ENCODE measurements at regions of chr4 and their contacts with region 1.

Region 1: GRCh38 chr4:68498413-68499007 is 51.2 kb downstream of the TMPRSS11E start:
- DNase-seq: peak; percentile 84
- ATAC-seq: peak; percentile 60
- H3K4me3 ChIP-seq: no peak overlapping the region
- H3K27ac ChIP-seq: no peak overlapping the region
- H3K4me1 ChIP-seq: peaks cover 9% of the 10 kb centered on the region; the same call in 1 of the 2 replicates
- H3K27me3 ChIP-seq: no peaks in the 10 kb centered on the region
- CTCF ChIP-seq: peak; percentile 98

Region 2: DNA sequence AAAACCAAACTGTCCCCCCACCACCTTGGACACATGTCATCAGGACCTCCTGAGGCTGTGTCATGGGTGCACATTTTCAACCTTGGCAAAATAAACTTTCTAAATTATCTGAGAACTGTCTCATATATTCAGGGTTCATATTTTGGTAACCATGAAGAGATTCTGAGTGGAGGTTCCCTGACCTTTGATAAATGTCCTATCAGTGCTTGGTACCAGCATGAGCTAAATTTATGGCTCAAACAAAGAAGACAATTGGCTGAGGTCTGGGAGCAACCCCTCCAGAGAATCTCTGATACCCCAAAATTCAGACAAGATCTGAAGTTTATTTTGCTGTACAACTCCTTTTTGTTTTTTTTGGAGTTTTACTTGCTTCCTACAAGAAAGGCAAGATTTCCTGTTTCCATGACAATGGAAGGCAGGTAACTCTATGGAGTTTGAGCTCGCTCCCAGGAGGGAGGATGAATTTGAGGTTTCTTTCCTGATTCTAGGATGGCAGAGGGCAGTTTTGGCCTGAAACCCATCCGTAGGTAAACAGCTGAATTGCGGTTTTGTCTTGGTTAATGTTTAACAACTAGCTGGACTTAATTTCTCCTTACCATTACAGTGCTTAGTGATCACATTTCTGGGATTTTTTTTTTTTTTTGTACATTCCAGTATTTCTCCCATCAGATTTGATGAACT is 157.4 kb after region 1 on chr4:
- CTCF ChIA-PET with region 1: no interaction called
- POLR2A ChIA-PET with region 1: no interaction called
- intact Hi-C with region 1: loop called (anchors 5 kb)
- DNase-seq: peak; percentile 90
- ATAC-seq: peak; percentile 72
- H3K4me3 ChIP-seq: peak overlapping the region; percentile 46
- H3K27ac ChIP-seq: peak overlapping the region; percentile 86
- H3K4me1 ChIP-seq: peaks cover 36% of the 10 kb centered on the region
- H3K27me3 ChIP-seq: no peaks in the 10 kb centered on the region
- CTCF ChIP-seq: no peak

Region 3: DNA sequence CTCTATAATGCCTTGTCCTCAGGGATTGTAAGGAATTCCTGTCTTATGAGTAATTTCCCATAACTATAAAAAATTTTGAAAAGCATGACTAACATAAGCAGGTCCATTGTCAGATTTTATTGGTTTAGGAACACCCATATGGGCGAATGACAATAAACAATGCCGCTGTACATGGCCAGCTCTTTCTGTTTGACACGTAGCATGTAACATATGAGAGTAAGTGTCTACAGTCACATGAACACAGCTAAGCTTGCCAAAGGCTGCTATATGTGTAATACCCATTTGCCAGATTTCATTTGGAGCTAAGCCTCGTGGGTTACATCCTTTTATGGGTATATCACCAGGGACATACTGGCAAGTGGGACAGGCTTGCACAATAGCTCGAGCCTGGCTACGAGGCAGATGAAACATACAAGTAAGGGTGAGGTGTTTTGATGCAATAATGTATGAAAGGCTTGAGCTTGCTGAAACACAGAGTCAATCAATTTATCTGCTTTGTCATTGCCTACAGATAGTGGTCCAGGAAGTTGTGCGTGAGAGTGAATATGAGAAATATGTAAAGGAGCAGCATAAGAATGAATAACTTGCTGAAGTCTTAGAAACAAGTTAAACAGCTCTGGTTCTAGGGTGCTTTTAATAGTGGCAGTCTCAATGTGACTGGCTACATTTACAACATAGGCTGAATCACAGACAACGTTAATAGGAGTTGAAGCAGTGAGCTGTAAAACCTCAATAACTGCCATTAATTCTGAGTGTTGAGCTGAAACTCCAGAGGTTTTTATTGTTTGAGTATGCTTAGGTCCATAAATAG is 249.9 kb after region 1 on chr4:
- CTCF ChIA-PET with region 1: no interaction called
- POLR2A ChIA-PET with region 1: no interaction called
- intact Hi-C with region 1: loop called (anchors 5 kb)
- DNase-seq: peak; percentile 98
- ATAC-seq: peak; percentile 87
- H3K4me3 ChIP-seq: peak overlapping the region; percentile 44; the same call in 1 of the 2 replicates
- H3K27ac ChIP-seq: peak overlapping the region; percentile 96
- H3K4me1 ChIP-seq: peaks cover 21% of the 10 kb centered on the region
- H3K27me3 ChIP-seq: no peaks in the 10 kb centered on the region
- CTCF ChIP-seq: no peak

Region 4: DNA sequence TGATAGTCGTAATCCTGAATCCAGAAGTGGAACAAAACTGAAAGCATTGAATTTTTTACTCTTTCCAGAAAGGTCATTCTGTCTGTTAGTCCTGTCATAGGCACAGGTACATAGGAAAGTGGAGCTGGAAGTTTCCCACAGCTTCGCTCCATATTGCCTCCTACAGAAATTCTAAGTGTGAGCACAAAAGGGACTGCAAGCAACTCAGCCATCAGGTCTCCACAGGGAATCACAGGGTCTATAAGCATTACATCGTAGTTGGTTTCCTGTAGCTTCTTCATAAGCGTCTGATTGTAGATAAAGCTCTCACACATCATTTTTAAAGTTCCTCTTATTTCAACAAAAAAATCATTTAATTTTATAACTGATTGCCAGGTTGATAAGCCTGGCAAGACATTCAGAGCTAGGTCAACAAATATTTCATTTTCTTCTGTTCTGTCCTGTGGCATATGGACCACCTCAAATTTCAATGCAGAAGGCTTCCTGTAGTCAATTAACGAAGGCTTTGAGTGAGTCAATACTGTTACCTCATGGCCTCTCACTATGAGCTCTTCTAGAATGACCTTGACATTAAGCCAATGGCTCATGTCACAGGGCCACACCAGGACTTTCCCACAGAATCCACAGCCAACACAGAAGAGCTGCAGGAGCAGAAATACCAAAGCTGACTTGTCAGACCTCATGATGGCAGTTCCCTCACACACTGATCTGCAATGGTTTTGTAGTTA is 452.7 kb after region 1 on chr4 and contains the start of gene UGT2A3:
- CTCF ChIA-PET with region 1: no interaction called
- POLR2A ChIA-PET with region 1: no interaction called
- intact Hi-C with region 1: loop called (anchors 5 kb)
- DNase-seq: no peak
- ATAC-seq: no peak
- H3K4me3 ChIP-seq: no peak within 1 kb of the TSS
- H3K27ac ChIP-seq: no peak within 1 kb of the TSS
- H3K4me1 ChIP-seq: no peaks in the 10 kb centered on the region
- H3K27me3 ChIP-seq: no peaks in the 10 kb centered on the region
- CTCF ChIP-seq: no peak
- total RNA-seq, gene UGT2A3: not detected in 2 replicates

Region 5: GRCh38 chr4:69167300-69167699 is 668.8 kb after region 1 on chr4:
- CTCF ChIA-PET with region 1: no interaction called
- POLR2A ChIA-PET with region 1: no interaction called
- intact Hi-C with region 1: loop called (anchors 1 kb)
- DNase-seq: no peak
- ATAC-seq: no peak
- H3K4me3 ChIP-seq: no peak overlapping the region
- H3K27ac ChIP-seq: no peak overlapping the region
- H3K4me1 ChIP-seq: no peaks in the 10 kb centered on the region
- H3K27me3 ChIP-seq: no peaks in the 10 kb centered on the region
- CTCF ChIP-seq: no peak

Region 6: GRCh38 chr4:69617083-69617694 is 1118.7 kb after region 1 on chr4:
- CTCF ChIA-PET with region 1: no interaction called
- POLR2A ChIA-PET with region 1: no interaction called
- intact Hi-C with region 1: loop called (anchors 1 kb)
- DNase-seq: peak; percentile 76
- ATAC-seq: peak; percentile 51
- H3K4me3 ChIP-seq: no peak overlapping the region
- H3K27ac ChIP-seq: no peak overlapping the region
- H3K4me1 ChIP-seq: no peaks in the 10 kb centered on the region
- H3K27me3 ChIP-seq: peaks cover 11% of the 10 kb centered on the region; the same call in 1 of the 2 replicates
- CTCF ChIP-seq: peak; percentile 83

Measured in PC-3 (cell line).